Endothelial cell of umbilical vein (primary cell): ENCODE measurements at regions of chr1 and their contacts with region 1.

Region 1: GRCh38 chr1:20696397-20697329 is 21.1 kb downstream of the KIF17 start:
- DNase-seq: peak; percentile 86
- H3K4me3 ChIP-seq: peak overlapping the region; percentile 34 to 45 (median 38)
- H3K27ac ChIP-seq: peak overlapping the region; percentile 44
- H3K4me1 ChIP-seq: peaks cover 4% of the 10 kb centered on the region
- H3K27me3 ChIP-seq: no peaks in the 10 kb centered on the region
- CTCF ChIP-seq: peak; percentile 65 to 96
- POLR2A ChIP-seq: no peak

Region 2: DNA sequence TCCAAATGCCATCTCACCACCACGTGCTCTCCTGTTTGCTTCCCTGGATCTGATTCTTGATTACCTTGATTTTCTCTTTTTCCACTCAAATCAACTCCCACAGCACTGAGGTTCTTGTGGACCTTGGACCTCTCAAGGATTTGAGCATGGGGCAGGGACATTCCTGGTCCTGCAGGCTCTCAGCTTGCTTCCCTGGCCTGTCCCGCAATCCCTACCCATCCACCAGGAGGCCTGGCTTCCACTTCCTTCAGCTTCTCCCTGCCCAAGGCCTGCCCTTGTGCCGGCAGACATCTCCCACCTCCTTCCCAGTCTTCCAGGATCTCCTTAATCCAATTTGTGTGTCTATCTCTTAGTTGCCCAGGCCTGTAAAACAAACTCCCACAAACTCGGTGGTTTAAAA is 738.9 kb before region 1 on chr1:
- CTCF ChIA-PET with region 1: no interaction called
- POLR2A ChIA-PET with region 1: no interaction called
- dilution Hi-C with region 1: no loop called
- intact Hi-C with region 1: no loop called
- DNase-seq: no peak
- H3K4me3 ChIP-seq: no peak overlapping the region
- H3K27ac ChIP-seq: no peak overlapping the region
- H3K4me1 ChIP-seq: no peaks in the 10 kb centered on the region
- H3K27me3 ChIP-seq: peaks cover 1 to 3% of the 10 kb centered on the region in 2 experiments
- CTCF ChIP-seq: peak in 1 of 2 donors; percentile 6
- POLR2A ChIP-seq: no peak

Region 3: GRCh38 chr1:20706841-20707240 is 10.2 kb after region 1 on chr1:
- CTCF ChIA-PET with region 1: interaction called, 18 read pairs
- POLR2A ChIA-PET with region 1: no interaction called
- dilution Hi-C with region 1: no loop called
- intact Hi-C with region 1: no loop called
- DNase-seq: no peak
- H3K4me3 ChIP-seq: no peak overlapping the region
- H3K27ac ChIP-seq: no peak overlapping the region
- H3K4me1 ChIP-seq: no peaks in the 10 kb centered on the region
- H3K27me3 ChIP-seq: no peaks in the 10 kb centered on the region
- CTCF ChIP-seq: no peak
- POLR2A ChIP-seq: no peak

Region 4: GRCh38 chr1:20727384-20728316 is 31.0 kb after region 1 on chr1:
- CTCF ChIA-PET with region 1: interaction called, 18 read pairs
- POLR2A ChIA-PET with region 1: no interaction called
- dilution Hi-C with region 1: no loop called
- intact Hi-C with region 1: loop called (anchors 1 kb)
- DNase-seq: no peak
- H3K4me3 ChIP-seq: no peak overlapping the region
- H3K27ac ChIP-seq: no peak overlapping the region
- H3K4me1 ChIP-seq: peaks cover 5% of the 10 kb centered on the region
- H3K27me3 ChIP-seq: peaks cover 7 to 16% of the 10 kb centered on the region in 2 experiments
- CTCF ChIP-seq: peak; percentile 14 to 16
- POLR2A ChIP-seq: no peak

Region 5: GRCh38 chr1:20739225-20739624 is 42.6 kb after region 1 on chr1:
- CTCF ChIA-PET with region 1: interaction called, 12 read pairs
- POLR2A ChIA-PET with region 1: no interaction called
- dilution Hi-C with region 1: no loop called
- intact Hi-C with region 1: no loop called
- DNase-seq: no peak
- H3K4me3 ChIP-seq: no peak overlapping the region
- H3K27ac ChIP-seq: no peak overlapping the region
- H3K4me1 ChIP-seq: peaks cover 3% of the 10 kb centered on the region
- H3K27me3 ChIP-seq: no peaks in the 10 kb centered on the region
- CTCF ChIP-seq: no peak
- POLR2A ChIP-seq: no peak

Region 6: GRCh38 chr1:21077085-21077484 is 380.4 kb after region 1 on chr1:
- CTCF ChIA-PET with region 1: no interaction called
- POLR2A ChIA-PET with region 1: no interaction called
- dilution Hi-C with region 1: no loop called
- intact Hi-C with region 1: loop called (anchors 10 kb)
- DNase-seq: peak; percentile 77
- H3K4me3 ChIP-seq: no peak overlapping the region
- H3K27ac ChIP-seq: peak overlapping the region; percentile 8
- H3K4me1 ChIP-seq: peaks cover 16% of the 10 kb centered on the region
- H3K27me3 ChIP-seq: no peaks in the 10 kb centered on the region
- CTCF ChIP-seq: no peak
- POLR2A ChIP-seq: no peak